PC-3 (cell line): ENCODE measurements at regions of chr19 and their contacts with region 1.

Region 1: DNA sequence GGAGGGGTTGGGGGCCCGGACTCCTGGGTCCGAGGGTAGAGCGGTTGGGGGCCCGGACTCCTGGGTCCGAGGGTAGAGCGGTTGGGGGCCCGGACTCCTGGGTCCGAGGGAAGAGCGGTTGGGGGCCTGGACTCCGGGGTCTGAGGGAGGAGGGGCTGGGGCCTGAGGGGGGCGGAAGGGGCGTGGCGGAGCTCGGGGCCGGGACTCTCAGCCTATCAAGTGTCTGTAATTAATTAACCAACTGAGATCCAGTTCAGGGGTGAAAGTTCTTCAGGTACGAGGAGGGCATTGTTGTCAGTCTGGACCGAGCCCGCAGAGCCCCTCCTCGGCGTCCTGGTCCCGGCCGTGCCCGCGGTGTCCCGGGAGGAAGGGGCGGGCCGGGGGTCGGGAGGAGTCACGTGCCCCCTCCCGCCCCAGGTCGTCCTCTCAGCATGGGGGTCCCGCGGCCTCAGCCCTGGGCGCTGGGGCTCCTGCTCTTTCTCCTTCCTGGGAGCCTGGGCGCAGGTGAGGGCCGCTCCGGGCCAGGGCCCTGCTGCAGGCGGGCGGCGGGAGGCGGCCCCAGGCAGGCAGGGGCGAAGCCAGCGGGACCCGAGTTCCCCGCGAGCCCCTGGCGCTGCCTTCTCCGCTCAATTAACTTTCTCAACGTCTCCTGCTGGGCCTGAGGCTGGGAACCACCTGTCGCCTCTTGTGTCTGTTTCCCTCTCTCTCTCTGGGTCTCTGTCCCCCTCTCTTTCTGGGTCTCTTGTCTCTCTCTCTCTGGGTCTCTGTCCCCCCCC is 697 bp downstream of the FCGRT start:
- DNase-seq: no peak
- ATAC-seq: peak; percentile 75
- H3K4me3 ChIP-seq: peak overlapping the region; percentile 97
- H3K27ac ChIP-seq: no peak overlapping the region
- H3K4me1 ChIP-seq: peaks cover 11% of the 10 kb centered on the region
- H3K27me3 ChIP-seq: no peaks in the 10 kb centered on the region
- CTCF ChIP-seq: no peak

Region 2: DNA sequence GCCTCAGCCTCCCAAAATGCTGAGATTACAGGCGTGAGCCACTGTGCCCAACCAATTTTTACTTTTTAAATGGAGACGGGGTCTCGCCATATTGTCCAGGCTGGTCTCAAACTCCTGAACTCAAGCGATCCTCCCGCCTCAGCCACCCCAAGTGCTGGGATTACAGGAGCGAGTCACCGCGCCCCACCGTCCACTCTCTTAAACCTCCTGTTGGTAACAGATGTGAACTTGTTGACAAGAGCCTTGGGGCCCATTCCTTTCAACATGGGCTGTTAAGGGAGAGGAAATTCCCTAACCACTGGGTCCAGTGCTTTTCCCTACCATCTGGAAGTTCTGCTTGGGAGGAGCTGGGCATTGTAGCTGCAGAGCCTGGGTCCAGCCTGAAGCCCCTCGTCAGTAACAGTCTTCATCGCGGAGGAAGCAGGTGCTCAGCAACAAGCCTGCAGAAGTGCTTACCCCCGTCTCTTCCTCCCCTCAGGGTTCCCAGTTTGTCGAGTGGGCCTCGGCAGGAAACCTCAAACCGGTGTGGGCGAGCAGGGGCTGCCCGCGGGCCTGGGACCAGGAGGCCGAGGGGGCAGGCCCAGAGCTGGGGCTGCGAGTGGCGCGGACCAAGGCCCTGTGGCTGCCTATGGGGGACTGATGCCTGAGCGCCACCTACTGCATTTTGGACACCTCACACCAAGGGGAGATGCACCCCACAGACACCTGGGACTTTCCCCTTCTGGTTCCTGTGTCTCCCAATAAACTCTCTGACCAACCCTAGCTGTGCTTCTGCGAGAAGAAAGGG is 43.1 kb before region 1 on chr19:
- CTCF ChIA-PET with region 1: no interaction called
- POLR2A ChIA-PET with region 1: no interaction called
- intact Hi-C with region 1: no loop called
- DNase-seq: no peak
- ATAC-seq: no peak
- H3K4me3 ChIP-seq: no peak overlapping the region
- H3K27ac ChIP-seq: no peak overlapping the region
- H3K4me1 ChIP-seq: no peaks in the 10 kb centered on the region
- H3K27me3 ChIP-seq: no peaks in the 10 kb centered on the region
- CTCF ChIP-seq: peak; percentile 44; the same call in 1 of the 2 replicates

Region 3: DNA sequence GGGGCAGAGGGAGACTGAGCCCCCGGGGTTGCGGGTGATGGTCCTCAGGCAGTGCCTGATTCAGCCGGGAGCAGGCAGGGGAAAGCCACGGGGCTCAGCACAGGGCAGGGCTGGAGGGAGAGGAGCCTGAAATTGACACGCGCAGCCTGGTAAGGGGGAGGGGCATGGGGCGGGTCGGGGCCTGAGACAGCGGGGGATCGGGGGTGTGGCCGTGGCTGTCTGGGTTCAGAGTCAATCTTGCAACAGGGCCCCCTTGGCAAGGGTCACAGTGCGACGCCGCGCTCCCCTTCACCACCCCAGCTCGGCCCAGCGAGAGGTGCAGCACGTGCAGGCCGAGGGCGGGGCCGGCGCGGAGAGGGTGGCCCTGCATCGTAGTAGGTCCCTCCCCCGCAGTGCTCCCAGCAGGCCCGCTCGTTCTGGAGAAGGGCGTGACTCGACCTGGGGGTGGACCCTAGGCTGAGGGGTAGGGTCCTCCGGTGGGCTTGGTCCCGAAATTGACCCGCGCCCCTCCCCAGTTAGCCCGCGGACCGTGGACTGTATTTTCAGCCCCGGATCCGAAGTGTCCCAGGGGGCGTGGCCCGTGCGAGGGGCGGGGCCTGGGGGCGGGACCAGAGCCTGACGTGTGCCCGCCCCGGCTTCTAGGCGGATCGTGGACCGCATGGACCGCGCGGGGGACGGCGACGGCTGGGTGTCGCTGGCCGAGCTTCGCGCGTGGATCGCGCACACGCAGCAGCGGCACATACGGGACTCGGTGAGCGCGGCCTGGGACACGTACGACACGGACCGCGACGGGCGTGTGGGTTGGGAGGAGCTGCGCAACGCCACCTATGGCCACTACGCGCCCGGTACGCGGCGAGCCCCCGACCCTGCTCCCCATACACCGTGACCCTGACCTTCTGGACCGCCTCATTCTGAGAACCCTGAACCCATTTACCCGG is 20.7 kb after region 1 on chr19:
- CTCF ChIA-PET with region 1: no interaction called
- POLR2A ChIA-PET with region 1: no interaction called
- intact Hi-C with region 1: loop called (anchors 1 kb)
- DNase-seq: peak; percentile 68
- ATAC-seq: peak; percentile 87
- H3K4me3 ChIP-seq: peak overlapping the region; percentile 84
- H3K27ac ChIP-seq: no peak overlapping the region
- H3K4me1 ChIP-seq: peaks cover 11% of the 10 kb centered on the region; the same call in 1 of the 2 replicates
- H3K27me3 ChIP-seq: no peaks in the 10 kb centered on the region
- CTCF ChIP-seq: peak; percentile 51